ENCODE measurements at regions of chr3 and their contacts with region 1.

Region 1: GRCh38 chr3:134794950-134795745 is at the start of gene EPHB1:
- DNase-seq: peak; percentile 78 to 93
- ATAC-seq: peak; percentile 90 to 93 (median 92)
- H3K4me3 ChIP-seq: peak within 1 kb of the TSS; percentile 86
- H3K27ac ChIP-seq: peak within 1 kb of the TSS; percentile 80
- H3K4me1 ChIP-seq: peaks cover 20% of the 10 kb centered on the region
- H3K27me3 ChIP-seq: peaks cover 0 to 11% (median 0%) of the 10 kb centered on the region in 3 donors
- CTCF ChIP-seq: peak; percentile 96
- total RNA-seq, gene EPHB1: 1.6 to 3.3 (median 2.5) TPM

Region 2: DNA sequence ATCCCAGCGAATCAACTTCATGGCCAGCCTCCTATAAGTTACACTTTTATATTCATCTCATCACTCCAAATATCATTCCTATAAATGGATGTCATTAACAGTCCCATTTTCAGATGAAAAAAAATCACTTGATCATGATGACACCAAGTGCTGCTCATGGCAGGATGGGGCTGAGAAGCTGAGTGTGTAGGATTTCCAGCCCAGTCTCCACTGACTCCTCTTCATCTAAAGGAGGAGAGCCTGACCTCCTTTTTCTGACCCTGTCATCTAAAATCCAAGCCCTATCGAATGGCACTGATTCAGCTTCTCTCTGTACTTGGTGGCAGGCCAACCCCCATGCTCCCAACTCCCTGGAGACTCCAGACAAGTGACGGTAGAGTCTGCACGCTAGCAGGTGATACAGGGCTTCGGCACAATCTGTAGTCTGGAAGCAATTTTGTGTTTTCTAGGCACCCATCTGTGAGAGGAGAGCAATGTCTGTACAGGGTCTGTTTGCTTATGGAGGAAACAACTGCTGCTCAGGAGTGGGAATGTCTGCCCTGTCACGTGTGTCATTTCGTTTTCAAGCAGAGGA is 103.1 kb after region 1 on chr3:
- intact Hi-C with region 1: loop called in 1 of 2 experiments (anchors 5 kb)
- DNase-seq: no peak
- ATAC-seq: peak; percentile 48 to 88 (median 76)
- H3K4me3 ChIP-seq: no peak overlapping the region
- H3K27ac ChIP-seq: no peak overlapping the region
- H3K4me1 ChIP-seq: peaks cover 14% of the 10 kb centered on the region
- H3K27me3 ChIP-seq: no peaks in the 10 kb centered on the region
- CTCF ChIP-seq: no peak

Region 3: DNA sequence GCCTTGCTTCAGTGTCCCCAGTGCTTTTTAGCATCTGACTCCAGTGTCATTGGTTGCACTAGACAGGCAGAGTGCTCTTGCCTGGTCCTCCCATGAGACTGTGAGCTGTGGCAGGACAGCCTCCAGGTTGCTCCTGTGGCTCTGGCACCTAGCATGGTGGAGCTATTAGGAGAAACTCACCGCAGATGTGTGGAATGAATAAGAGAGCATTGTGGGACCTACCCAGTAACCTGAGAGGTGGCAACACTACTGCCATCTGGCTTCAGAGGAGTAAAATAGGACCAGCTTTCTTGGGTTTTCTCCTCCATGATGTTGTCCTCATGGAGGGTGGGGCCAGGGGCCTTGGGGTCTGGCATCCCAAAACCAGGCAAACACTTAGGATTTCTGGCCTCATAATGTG is 183.5 kb after region 1 on chr3:
- intact Hi-C with region 1: loop called in 1 of 2 experiments (anchors 1 kb)
- DNase-seq: no peak
- ATAC-seq: peak; percentile 75 to 97 (median 91)
- H3K4me3 ChIP-seq: no peak overlapping the region
- H3K27ac ChIP-seq: no peak overlapping the region
- H3K4me1 ChIP-seq: no peaks in the 10 kb centered on the region
- H3K27me3 ChIP-seq: no peaks in the 10 kb centered on the region
- CTCF ChIP-seq: peak; percentile 34

Region 4: GRCh38 chr3:135240426-135240825 is 445.3 kb after region 1 on chr3:
- intact Hi-C with region 1: loop called (anchors 10 kb)
- DNase-seq: no peak
- ATAC-seq: peak in 2 of 4 donors; percentile 44 to 61
- H3K4me3 ChIP-seq: no peak overlapping the region
- H3K27ac ChIP-seq: no peak overlapping the region
- H3K4me1 ChIP-seq: no peaks in the 10 kb centered on the region
- H3K27me3 ChIP-seq: no peaks in the 10 kb centered on the region
- CTCF ChIP-seq: no peak

Region 5: GRCh38 chr3:135503760-135504686 is 708.9 kb after region 1 on chr3:
- intact Hi-C with region 1: loop called (anchors 2 to 5 kb)
- DNase-seq: peak; percentile 56 to 88
- ATAC-seq: peak; percentile 73 to 98 (median 86)
- H3K4me3 ChIP-seq: no peak overlapping the region
- H3K27ac ChIP-seq: no peak overlapping the region
- H3K4me1 ChIP-seq: no peaks in the 10 kb centered on the region
- H3K27me3 ChIP-seq: no peaks in the 10 kb centered on the region
- CTCF ChIP-seq: peak; percentile 75

Region 6: GRCh38 chr3:135895106-135895733 is 1100.1 kb after region 1 on chr3:
- intact Hi-C with region 1: loop called (anchors 2 kb)
- DNase-seq: peak; percentile 62 to 83
- ATAC-seq: peak; percentile 69 to 87 (median 80)
- H3K4me3 ChIP-seq: no peak overlapping the region
- H3K27ac ChIP-seq: no peak overlapping the region
- H3K4me1 ChIP-seq: no peaks in the 10 kb centered on the region
- H3K27me3 ChIP-seq: no peaks in the 10 kb centered on the region
- CTCF ChIP-seq: peak; percentile 86